Heart right ventricle (tissue), 16 donors: ENCODE measurements at regions of chr1 and their contacts with region 1.

Region 1: GRCh38 chr1:231757101-231757404 is 130.5 kb downstream of the DISC1 start:
- DNase-seq: no peak
- ATAC-seq: peak in 5 of 8 donors; percentile 16 to 35 (median 31)
- H3K4me3 ChIP-seq: no peak overlapping the region
- H3K27ac ChIP-seq: no peak overlapping the region
- H3K4me1 ChIP-seq: peaks cover 0 to 6% (median 0%) of the 10 kb centered on the region in 9 donors
- H3K27me3 ChIP-seq: no peaks in the 10 kb centered on the region
- CTCF ChIP-seq: peak in 1 of 9 donors; percentile 28

Region 2: DNA sequence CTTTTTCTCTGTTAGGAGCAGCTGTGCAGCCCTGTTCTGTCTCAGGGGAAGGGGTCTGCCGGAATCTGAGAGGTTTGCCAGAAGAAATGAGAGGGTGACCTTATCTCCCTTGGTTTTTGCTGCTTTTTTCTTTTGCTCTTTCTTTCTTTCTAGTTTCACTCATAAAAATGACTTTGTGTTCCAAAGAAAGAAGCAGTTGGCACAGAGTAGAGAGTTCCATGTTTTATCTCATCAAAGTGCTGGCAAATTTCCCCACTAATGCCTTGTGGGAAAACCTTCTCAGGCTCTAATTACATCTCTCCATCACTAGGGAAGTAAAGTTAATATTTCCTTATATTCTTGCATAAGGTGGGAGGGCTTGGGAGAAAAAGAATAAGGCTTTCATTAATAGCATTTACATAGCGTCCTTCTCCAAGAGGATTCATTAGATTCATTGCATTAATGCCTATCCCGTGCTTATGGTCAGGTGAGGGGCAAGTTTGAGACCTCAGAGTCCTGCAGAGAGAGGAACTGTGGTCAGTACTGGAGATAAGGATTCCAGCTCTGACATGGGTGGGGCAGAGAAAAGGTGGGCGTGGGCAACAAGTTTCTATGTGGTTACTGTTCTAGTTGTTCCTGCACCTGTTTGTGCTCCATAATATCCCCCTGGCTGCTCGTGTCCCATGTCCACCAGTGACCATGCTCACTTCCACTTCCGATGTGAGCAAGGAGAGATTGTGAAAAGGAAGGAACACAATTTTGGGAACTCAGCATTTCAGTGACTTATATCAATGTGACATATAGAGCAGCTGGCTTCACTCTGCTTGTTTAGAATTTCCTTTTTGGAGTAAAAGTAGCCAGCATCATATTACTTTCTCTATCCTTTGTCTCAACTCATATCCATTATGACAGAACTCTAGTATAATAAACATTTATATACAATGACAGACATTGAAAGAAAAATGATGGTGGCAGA is 51.0 kb before region 1 on chr1:
- intact Hi-C with region 1: no loop called
- DNase-seq: no peak
- ATAC-seq: peak in 1 of 8 donors; percentile 47
- H3K4me3 ChIP-seq: no peak overlapping the region
- H3K27ac ChIP-seq: no peak overlapping the region
- H3K4me1 ChIP-seq: peaks cover 0 to 19% (median 11%) of the 10 kb centered on the region in 9 donors
- H3K27me3 ChIP-seq: no peaks in the 10 kb centered on the region
- CTCF ChIP-seq: no peak

Region 3: GRCh38 chr1:231806623-231807495 is 49.8 kb after region 1 on chr1:
- intact Hi-C with region 1: loop called in 5 of 10 experiments (anchors 2 to 5 kb)
- DNase-seq: peak in 1 of 2 donors; percentile 51
- ATAC-seq: peak; percentile 67 to 84 (median 78)
- H3K4me3 ChIP-seq: no peak overlapping the region
- H3K27ac ChIP-seq: no peak overlapping the region
- H3K4me1 ChIP-seq: peaks cover 2 to 33% (median 13%) of the 10 kb centered on the region in 9 donors
- H3K27me3 ChIP-seq: no peaks in the 10 kb centered on the region
- CTCF ChIP-seq: peak; percentile 26 to 71 (median 59)

Region 4: GRCh38 chr1:231853588-231854207 is 96.6 kb after region 1 on chr1:
- intact Hi-C with region 1: loop called in 1 of 10 experiments (anchors 10 kb)
- DNase-seq: peak in 1 of 2 donors; percentile 44
- ATAC-seq: peak in 7 of 8 donors; percentile 38 to 64 (median 50)
- H3K4me3 ChIP-seq: no peak overlapping the region
- H3K27ac ChIP-seq: peak overlapping the region in 3 of 10 donors; percentile 1 to 32 (median 26)
- H3K4me1 ChIP-seq: peaks cover 4 to 45% (median 24%) of the 10 kb centered on the region in 9 donors
- H3K27me3 ChIP-seq: no peaks in the 10 kb centered on the region
- CTCF ChIP-seq: no peak

Region 5: GRCh38 chr1:232306269-232306961 is 549.4 kb after region 1 on chr1:
- intact Hi-C with region 1: loop called in 1 of 10 experiments (anchors 10 kb)
- DNase-seq: peak; percentile 45 to 63
- ATAC-seq: peak; percentile 78 to 94 (median 90)
- H3K4me3 ChIP-seq: no peak overlapping the region
- H3K27ac ChIP-seq: peak overlapping the region in 8 of 10 donors; percentile 9 to 73 (median 56)
- H3K4me1 ChIP-seq: peaks cover 0 to 27% (median 19%) of the 10 kb centered on the region in 9 donors
- H3K27me3 ChIP-seq: no peaks in the 10 kb centered on the region
- CTCF ChIP-seq: peak; percentile 10 to 67 (median 46)